ENCODE measurements at regions of chr20 and their contacts with region 1.

Region 1: GRCh38 chr20:59920944-59921343 is 12.5 kb downstream of the SYCP2 start:
- DNase-seq: no peak
- ATAC-seq: no peak
- H3K4me3 ChIP-seq: no peak overlapping the region
- H3K27ac ChIP-seq: no peak overlapping the region
- H3K4me1 ChIP-seq: no peaks in the 10 kb centered on the region; a peak in 1 of 4 replicates
- H3K27me3 ChIP-seq: peaks cover 28% of the 10 kb centered on the region
- CTCF ChIP-seq: no peak
- POLR2A ChIP-seq: no peak
- RAD21 ChIP-seq: no peak

Region 2: DNA sequence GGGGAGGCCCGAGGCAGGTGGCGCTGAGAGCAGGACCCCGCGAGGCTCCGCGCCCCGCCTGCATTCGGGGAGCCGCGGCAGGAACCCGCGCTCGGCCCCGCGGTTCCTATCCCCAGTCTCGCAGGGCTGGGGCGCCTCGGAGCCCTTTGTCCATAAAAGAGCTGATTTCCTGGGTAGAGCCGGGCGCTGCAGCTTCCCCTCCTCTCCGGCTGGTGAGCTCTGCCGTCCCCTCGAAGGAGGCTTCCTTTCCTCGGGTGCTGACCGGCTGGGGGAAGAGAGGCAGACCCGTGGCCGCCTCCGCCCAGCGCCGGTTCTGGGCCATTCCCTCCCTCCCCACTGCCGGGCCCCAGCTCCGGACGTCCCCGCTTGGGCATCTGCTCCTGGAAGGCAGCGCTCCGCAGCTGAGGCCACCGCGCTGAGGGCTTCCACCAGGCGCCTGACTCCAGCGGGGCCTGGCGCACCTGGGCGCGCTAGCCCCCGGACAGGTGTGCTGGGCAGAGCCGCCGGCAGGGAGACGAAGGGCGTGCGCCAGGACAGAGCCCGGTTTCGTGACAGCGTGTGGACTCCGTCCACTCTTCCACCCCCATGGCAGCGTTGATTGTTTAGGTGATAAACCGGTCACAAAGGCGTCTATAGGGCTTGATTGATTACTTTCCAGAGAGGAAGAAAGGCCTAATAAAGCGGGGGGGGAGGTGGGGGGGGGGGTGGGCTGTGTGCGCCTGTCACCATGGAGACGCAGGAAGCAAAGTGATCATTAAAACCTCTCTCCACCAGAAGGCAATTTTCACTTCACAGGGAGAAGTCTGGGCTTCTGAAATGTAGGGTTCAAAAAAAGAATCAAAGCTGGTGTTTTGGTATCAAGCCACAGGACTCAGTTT is 315.5 kb before region 1 on chr20:
- CTCF ChIA-PET with region 1: no interaction called
- POLR2A ChIA-PET with region 1: no interaction called
- RAD21 ChIA-PET with region 1: no interaction called
- intact Hi-C with region 1: no loop called
- DNase-seq: no peak
- ATAC-seq: no peak
- H3K4me3 ChIP-seq: no peak overlapping the region
- H3K27ac ChIP-seq: no peak overlapping the region
- H3K4me1 ChIP-seq: no peaks in the 10 kb centered on the region
- H3K27me3 ChIP-seq: peaks cover 55% of the 10 kb centered on the region
- CTCF ChIP-seq: no peak
- POLR2A ChIP-seq: no peak
- RAD21 ChIP-seq: no peak

Region 3: DNA sequence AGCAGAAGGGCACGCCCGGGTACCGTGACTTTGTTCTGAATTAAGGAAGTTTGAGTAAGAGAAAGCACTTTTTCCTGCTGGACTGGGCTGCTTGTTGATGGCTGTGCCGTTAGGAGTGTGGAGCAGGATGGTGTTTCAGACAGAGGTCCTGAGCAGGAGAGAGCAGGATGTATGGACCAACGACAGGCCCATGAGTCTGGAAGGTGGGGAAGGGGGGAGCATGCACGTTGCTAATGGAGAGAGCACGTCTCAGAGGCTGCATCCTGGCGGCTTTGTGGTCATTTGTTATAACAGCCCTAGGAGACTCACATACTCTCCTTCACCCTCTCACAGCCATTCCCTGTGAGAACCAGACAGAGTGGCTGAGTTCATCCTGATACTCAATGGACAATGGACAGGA is 259.8 kb before region 1 on chr20:
- CTCF ChIA-PET with region 1: no interaction called
- POLR2A ChIA-PET with region 1: no interaction called
- RAD21 ChIA-PET with region 1: no interaction called
- intact Hi-C with region 1: no loop called
- DNase-seq: no peak
- ATAC-seq: no peak
- H3K4me3 ChIP-seq: no peak overlapping the region
- H3K27ac ChIP-seq: no peak overlapping the region
- H3K4me1 ChIP-seq: no peaks in the 10 kb centered on the region
- H3K27me3 ChIP-seq: peaks cover 35% of the 10 kb centered on the region
- CTCF ChIP-seq: no peak
- POLR2A ChIP-seq: no peak
- RAD21 ChIP-seq: no peak

Region 4: GRCh38 chr20:59864726-59865125 is 56.2 kb before region 1 on chr20:
- CTCF ChIA-PET with region 1: no interaction called
- POLR2A ChIA-PET with region 1: no interaction called
- RAD21 ChIA-PET with region 1: no interaction called
- intact Hi-C with region 1: loop called (anchors 5 kb)
- DNase-seq: no peak
- ATAC-seq: no peak
- H3K4me3 ChIP-seq: no peak overlapping the region
- H3K27ac ChIP-seq: no peak overlapping the region
- H3K4me1 ChIP-seq: no peaks in the 10 kb centered on the region
- H3K27me3 ChIP-seq: peaks cover 42% of the 10 kb centered on the region
- CTCF ChIP-seq: no peak
- POLR2A ChIP-seq: no peak
- RAD21 ChIP-seq: no peak

Region 5: GRCh38 chr20:59933849-59934596 is 13.1 kb after region 1 on chr20:
- CTCF ChIA-PET with region 1: interaction called, 14 read pairs
- POLR2A ChIA-PET with region 1: no interaction called
- RAD21 ChIA-PET with region 1: no interaction called
- intact Hi-C with region 1: no loop called
- DNase-seq: peak; percentile 15
- ATAC-seq: peak; percentile 100
- H3K4me3 ChIP-seq: peak overlapping the region in 1 of 2 experiments; percentile 18; a peak in 1 of 4 replicates
- H3K27ac ChIP-seq: no peak overlapping the region
- H3K4me1 ChIP-seq: peaks cover 2 to 9% of the 10 kb centered on the region in 2 experiments; a peak in 3 of 4 replicates
- H3K27me3 ChIP-seq: no peaks in the 10 kb centered on the region; the same call in 1 of the 2 replicates
- CTCF ChIP-seq: peak; percentile 25 to 97 (median 92); a peak in 5 of 6 replicates
- POLR2A ChIP-seq: no peak
- RAD21 ChIP-seq: peak; percentile 31; the same call in 1 of the 2 replicates

Measured in HCT116 (cell line).